Dorsolateral prefrontal cortex (tissue), 120 donors: ENCODE measurements at regions of chr1 and their contacts with region 1.

Region 1: DNA sequence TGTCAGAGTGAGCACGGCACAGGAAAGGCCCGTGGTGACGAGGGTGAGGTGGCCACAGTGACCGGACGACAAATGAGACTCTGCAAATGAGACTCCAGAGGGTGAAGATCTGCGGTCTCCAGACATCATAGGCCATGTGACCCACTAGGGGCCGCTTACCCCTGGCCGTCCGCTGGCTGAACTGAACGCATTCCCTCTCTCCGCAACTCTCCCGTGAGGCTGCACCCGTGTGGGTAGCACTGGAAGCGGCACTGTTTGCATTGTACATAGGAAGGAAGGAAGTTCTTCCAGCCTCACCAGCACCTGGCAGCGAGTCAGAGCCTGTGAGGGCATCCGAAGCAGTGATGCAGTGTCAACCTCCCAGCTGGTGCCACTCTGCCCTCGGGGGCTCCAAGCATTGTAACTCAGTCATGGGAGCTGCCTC is 23.6 kb upstream of the SPSB1 start:
- DNase-seq: peak in 1 of 10 donors; percentile 28
- H3K4me3 ChIP-seq: no peak overlapping the region
- H3K27ac ChIP-seq: no peak overlapping the region
- H3K27me3 ChIP-seq: no peaks in the 10 kb centered on the region
- CTCF ChIP-seq: no peak

Region 2: GRCh38 chr1:9455487-9456234 is 186.6 kb after region 1 on chr1:
- intact Hi-C with region 1: loop called (anchors 1 to 5 kb)
- DNase-seq: peak; percentile 17 to 79 (median 66)
- H3K4me3 ChIP-seq: no peak overlapping the region
- H3K27ac ChIP-seq: peak overlapping the region in 1 of 59 donors; percentile 24
- H3K27me3 ChIP-seq: no peaks in the 10 kb centered on the region
- CTCF ChIP-seq: peak; percentile 35 to 97 (median 85)

Region 3: DNA sequence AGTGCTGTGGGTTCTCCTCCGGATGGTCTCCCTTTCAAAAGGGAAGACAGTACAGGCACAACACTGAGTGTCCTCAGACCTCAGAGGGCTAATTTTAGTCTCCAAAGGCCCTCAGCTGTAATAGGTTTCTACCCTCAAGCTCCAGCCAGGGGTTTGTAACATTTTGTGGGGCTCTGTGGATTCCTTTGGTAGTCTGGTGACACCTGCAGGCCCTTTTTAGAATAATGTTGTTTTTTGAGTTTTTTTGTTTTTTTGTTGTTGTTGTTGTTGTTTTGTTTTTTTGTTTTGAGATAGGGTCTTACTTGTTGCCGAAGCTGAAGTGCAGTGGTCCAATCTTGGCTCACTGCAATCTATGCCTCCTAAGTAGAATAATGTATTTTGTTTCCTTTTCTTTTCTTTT is 304.6 kb after region 1 on chr1:
- intact Hi-C with region 1: loop called (anchors 5 to 10 kb)
- DNase-seq: no peak
- H3K4me3 ChIP-seq: no peak overlapping the region
- H3K27ac ChIP-seq: peak overlapping the region in 8 of 59 donors; percentile 4 to 48 (median 20)
- H3K27me3 ChIP-seq: no peaks in the 10 kb centered on the region
- CTCF ChIP-seq: peak in 54 of 56 donors; percentile 26 to 72 (median 50)